Activated CD4-positive, alpha-beta T cell treated with anti-CD3 and anti-CD28 coated beads, Interleukin-2, amount 10 ng/mL, durations not matched to agents 24 days and 14 days (primary cell): ENCODE measurements at regions of chr20 and their contacts with region 1.

Region 1: GRCh38 chr20:53643031-53643832 is 49.6 kb upstream of the ZNF217 start:
- DNase-seq: peak; percentile 91
- H3K4me3 Mint-ChIP-seq: peak overlapping the region; percentile 81
- H3K27ac Mint-ChIP-seq: peak overlapping the region; percentile 98
- H3K4me1 Mint-ChIP-seq: peaks cover 37% of the 10 kb centered on the region
- H3K27me3 Mint-ChIP-seq: no peaks in the 10 kb centered on the region

Region 2: GRCh38 chr20:53609491-53610445 is 33.5 kb before region 1 on chr20:
- intact Hi-C with region 1: loop called (anchors 2 kb)
- DNase-seq: peak; percentile 93
- H3K4me3 Mint-ChIP-seq: peak overlapping the region; percentile 83
- H3K27ac Mint-ChIP-seq: peak overlapping the region; percentile 97
- H3K4me1 Mint-ChIP-seq: peaks cover 27% of the 10 kb centered on the region
- H3K27me3 Mint-ChIP-seq: no peaks in the 10 kb centered on the region

Region 3: GRCh38 chr20:53660078-53660909 is 17.1 kb after region 1 on chr20:
- intact Hi-C with region 1: loop called (anchors 1 kb)
- DNase-seq: peak; percentile 82
- H3K4me3 Mint-ChIP-seq: peak overlapping the region; percentile 84
- H3K27ac Mint-ChIP-seq: peak overlapping the region; percentile 93
- H3K4me1 Mint-ChIP-seq: peaks cover 54% of the 10 kb centered on the region
- H3K27me3 Mint-ChIP-seq: no peaks in the 10 kb centered on the region

Region 4: DNA sequence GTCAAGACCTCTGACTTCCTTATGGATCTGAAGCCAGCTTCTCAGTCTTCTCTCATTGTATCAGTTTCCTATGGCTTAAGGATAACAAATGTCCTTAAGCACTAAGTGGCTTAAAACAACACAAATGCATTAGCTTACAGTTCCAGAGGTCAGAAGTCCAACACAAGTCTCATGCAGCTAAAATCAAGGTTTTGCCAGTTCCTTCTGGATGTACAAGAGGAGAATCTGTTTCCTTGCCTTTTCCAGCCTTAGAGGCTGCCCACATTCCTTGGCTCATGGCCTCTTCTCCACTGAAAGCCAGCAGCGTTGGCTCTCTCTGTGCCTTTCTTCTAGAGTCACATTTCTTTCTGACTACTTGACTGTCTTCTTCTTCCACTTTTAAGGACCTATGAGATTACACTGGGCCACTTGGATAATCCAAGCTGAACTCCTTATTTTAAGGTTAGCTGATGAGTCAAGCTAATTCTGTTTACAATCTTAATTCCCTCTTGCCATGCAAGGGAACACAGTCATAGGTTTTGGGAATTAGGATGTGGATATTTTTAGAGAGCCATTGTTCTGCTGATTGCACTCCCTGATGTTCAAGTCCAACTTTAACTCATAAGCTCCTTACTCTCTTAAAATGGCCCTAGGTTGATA is 248.2 kb after region 1 on chr20:
- intact Hi-C with region 1: loop called (anchors 5 kb)
- DNase-seq: no peak
- H3K4me3 Mint-ChIP-seq: no peak overlapping the region
- H3K27ac Mint-ChIP-seq: no peak overlapping the region
- H3K4me1 Mint-ChIP-seq: peaks cover 43% of the 10 kb centered on the region
- H3K27me3 Mint-ChIP-seq: no peaks in the 10 kb centered on the region